A673 (cell line): ENCODE measurements at regions of chr1 and their contacts with region 1.

Region 1: GRCh38 chr1:55560266-55560665 is 345.1 kb upstream of the USP24 start:
- DNase-seq: no peak
- H3K4me3 ChIP-seq: no peak overlapping the region
- H3K27ac ChIP-seq: no peak overlapping the region
- H3K4me1 ChIP-seq: no peaks in the 10 kb centered on the region
- H3K27me3 ChIP-seq: no peaks in the 10 kb centered on the region
- CTCF ChIP-seq: no peak

Region 2: GRCh38 chr1:55506686-55507577 is 53.3 kb before region 1 on chr1:
- CTCF ChIA-PET with region 1: no interaction called
- POLR2A ChIA-PET with region 1: no interaction called
- intact Hi-C with region 1: loop called (anchors 5 kb)
- DNase-seq: no peak
- H3K4me3 ChIP-seq: no peak overlapping the region
- H3K27ac ChIP-seq: no peak overlapping the region
- H3K4me1 ChIP-seq: no peaks in the 10 kb centered on the region
- H3K27me3 ChIP-seq: peaks cover 79% of the 10 kb centered on the region
- CTCF ChIP-seq: no peak